SK-N-SH (cell line): ENCODE measurements at regions of chr20 and their contacts with region 1.

Region 1: DNA sequence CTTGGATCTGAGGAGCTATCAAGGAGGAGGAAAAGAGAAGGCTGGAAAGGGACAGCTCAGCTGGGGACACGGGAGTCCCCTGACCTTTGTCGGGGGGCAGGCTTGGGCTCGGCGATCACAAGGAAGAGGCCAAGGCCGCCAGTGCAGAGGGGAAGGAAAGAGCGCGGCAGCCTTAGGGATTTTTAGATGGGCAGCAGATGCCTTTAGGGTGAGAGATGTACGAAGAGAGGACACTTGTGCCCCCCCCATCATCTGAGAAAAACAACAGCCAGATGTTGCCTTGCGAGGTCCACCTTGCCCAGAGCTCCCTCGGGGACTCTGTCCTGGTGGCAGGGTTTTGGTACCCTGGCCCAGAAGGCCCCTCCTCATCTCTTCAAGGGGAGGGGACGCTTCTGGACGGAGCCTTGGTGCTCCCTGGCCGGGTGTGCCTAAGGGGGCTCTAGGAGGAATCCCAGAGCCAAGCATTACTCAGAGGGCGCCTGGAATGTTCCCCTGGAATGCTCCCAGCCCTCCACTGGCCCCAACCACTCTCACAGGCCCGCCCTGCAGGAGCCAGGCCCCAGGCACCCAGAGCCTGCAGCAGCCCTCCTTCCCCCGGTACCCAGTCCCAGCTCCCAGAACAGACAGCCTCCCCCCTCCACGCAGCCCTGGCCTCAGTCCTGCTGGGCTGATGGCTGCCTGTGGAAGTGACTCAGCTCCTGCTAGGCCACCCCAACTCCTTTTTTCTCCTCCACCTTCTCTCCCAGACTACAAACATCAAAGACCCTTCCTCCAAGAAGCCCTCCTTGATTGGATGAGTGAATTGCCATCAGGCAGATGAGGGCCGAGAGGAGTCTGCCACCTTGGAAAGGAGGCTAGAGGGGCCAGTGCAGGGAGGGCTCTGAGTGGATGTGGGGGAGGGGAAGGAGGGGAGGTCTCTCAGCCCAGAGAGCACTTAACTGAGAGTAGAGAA is 1.8 kb downstream of the ADAM33 start:
- DNase-seq: peak; percentile 59
- H3K4me3 ChIP-seq: no peak overlapping the region
- H3K27ac ChIP-seq: peak overlapping the region; percentile 13 to 62; a peak in 3 of 4 replicates
- H3K4me1 ChIP-seq: peaks cover 19 to 24% of the 10 kb centered on the region in 2 experiments; a peak in 2 of 4 replicates
- H3K27me3 ChIP-seq: peaks cover 15% of the 10 kb centered on the region
- CTCF ChIP-seq: no peak
- EP300 ChIP-seq: no peak
- RAD21 ChIP-seq: no peak

Region 2: GRCh38 chr20:3563548-3564177 is 116.4 kb before region 1 on chr20:
- CTCF ChIA-PET with region 1: interaction called, 20 read pairs
- POLR2A ChIA-PET with region 1: no interaction called
- DNase-seq: peak; percentile 53
- H3K4me3 ChIP-seq: no peak overlapping the region; a peak in 1 of 4 replicates
- H3K27ac ChIP-seq: no peak overlapping the region
- H3K4me1 ChIP-seq: no peaks in the 10 kb centered on the region
- H3K27me3 ChIP-seq: no peaks in the 10 kb centered on the region
- CTCF ChIP-seq: peak; percentile 83
- EP300 ChIP-seq: no peak
- RAD21 ChIP-seq: peak; percentile 85

Region 3: DNA sequence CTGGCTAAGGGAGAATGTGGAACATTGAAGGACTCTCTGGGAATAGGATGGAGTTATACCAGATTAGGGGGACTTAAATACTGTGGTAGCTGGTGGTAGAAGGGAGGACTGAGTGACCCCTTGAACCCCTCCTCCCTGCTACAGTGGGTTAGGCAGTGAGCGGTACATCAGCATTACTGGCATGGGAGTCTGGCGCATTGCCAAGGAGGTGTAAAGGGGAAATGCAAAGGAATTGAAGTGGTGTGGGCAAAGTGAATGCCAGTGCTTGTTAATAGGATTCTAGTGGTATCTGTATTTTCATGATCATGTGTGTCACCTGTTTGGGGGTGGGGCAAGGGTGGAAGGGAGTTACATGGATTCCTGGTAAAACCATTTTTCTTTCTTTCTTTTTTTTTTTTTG is 76.9 kb before region 1 on chr20:
- CTCF ChIA-PET with region 1: no interaction called
- POLR2A ChIA-PET with region 1: no interaction called
- DNase-seq: no peak
- H3K4me3 ChIP-seq: no peak overlapping the region
- H3K27ac ChIP-seq: no peak overlapping the region
- H3K4me1 ChIP-seq: no peaks in the 10 kb centered on the region
- H3K27me3 ChIP-seq: no peaks in the 10 kb centered on the region
- CTCF ChIP-seq: no peak
- EP300 ChIP-seq: no peak
- RAD21 ChIP-seq: no peak

Region 4: DNA sequence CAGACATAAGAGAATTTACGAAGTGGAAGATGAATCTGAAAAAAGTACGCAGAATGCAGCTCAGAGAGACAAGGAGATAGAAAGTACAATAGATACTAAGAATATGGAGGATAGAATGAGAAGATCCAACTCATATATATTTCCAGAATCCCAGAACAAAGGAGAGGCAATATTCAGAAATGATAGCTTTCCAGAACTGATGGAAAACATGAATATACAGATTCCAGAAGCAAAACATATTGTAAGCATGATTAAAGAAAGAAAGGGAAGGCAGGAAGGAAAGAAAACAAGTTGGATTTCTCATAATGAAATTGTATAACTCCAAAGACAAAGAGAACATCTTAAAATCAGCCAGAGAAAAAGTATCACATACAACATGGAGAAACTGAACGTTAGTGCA is 39.8 kb before region 1 on chr20:
- CTCF ChIA-PET with region 1: no interaction called
- POLR2A ChIA-PET with region 1: no interaction called
- DNase-seq: no peak
- H3K4me3 ChIP-seq: no peak overlapping the region
- H3K27ac ChIP-seq: no peak overlapping the region
- H3K4me1 ChIP-seq: no peaks in the 10 kb centered on the region
- H3K27me3 ChIP-seq: no peaks in the 10 kb centered on the region
- CTCF ChIP-seq: no peak
- EP300 ChIP-seq: no peak
- RAD21 ChIP-seq: no peak

Region 5: GRCh38 chr20:3696200-3696599 is 16.2 kb after region 1 on chr20:
- CTCF ChIA-PET with region 1: interaction called, 39 read pairs
- POLR2A ChIA-PET with region 1: no interaction called
- DNase-seq: no peak
- H3K4me3 ChIP-seq: no peak overlapping the region
- H3K27ac ChIP-seq: no peak overlapping the region
- H3K4me1 ChIP-seq: no peaks in the 10 kb centered on the region
- H3K27me3 ChIP-seq: no peaks in the 10 kb centered on the region
- CTCF ChIP-seq: peak; percentile 55
- EP300 ChIP-seq: no peak
- RAD21 ChIP-seq: no peak

Region 6: DNA sequence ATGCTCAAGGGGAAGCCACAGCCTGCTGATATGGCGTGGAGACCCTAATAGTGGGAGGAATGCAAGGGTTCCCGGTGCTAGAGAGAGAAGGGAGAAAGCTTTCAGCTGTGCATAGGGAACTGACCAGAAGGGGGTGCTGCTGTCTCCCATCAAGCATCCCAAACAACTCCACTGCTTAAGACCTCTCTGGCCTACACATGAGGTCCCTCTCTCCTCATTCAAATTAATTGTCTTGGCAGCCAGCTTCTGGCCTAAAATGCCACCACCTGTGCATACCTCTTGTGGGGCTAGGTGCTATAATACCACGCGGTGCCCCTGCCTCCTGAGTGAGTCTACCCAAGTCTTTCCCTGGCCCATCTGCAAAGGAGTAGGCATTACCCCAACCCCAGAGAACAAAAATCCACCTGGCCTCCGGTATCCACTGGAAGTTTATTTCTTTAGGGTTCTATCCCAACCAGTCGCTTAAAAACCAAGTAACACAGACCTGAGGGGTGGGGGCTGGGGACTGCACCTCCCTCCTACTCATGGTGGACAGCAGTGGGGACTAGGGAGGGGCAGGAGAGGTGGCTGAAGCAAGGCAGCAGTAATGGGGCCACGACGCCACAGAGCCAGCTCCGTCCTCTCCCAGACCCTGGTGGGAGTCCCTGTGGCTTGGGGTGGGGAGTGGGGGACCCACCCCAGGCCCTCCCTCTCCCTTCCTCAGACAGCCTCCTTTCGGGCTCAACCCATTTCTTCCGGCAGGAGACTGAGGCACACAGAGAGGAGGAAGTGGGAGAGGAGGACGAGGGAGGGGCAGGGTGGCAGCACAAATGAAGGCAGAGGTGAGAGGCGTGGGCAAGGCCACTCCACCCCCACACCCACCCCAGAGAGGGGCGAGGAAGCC is 73.3 kb after region 1 on chr20:
- CTCF ChIA-PET with region 1: interaction called, 38 read pairs
- POLR2A ChIA-PET with region 1: no interaction called
- DNase-seq: peak; percentile 82
- H3K4me3 ChIP-seq: no peak overlapping the region
- H3K27ac ChIP-seq: no peak overlapping the region
- H3K4me1 ChIP-seq: peaks cover 0 to 6% of the 10 kb centered on the region in 2 experiments; a peak in 1 of 4 replicates
- H3K27me3 ChIP-seq: no peaks in the 10 kb centered on the region
- CTCF ChIP-seq: peak; percentile 77
- EP300 ChIP-seq: no peak
- RAD21 ChIP-seq: peak; percentile 72

Region 7: DNA sequence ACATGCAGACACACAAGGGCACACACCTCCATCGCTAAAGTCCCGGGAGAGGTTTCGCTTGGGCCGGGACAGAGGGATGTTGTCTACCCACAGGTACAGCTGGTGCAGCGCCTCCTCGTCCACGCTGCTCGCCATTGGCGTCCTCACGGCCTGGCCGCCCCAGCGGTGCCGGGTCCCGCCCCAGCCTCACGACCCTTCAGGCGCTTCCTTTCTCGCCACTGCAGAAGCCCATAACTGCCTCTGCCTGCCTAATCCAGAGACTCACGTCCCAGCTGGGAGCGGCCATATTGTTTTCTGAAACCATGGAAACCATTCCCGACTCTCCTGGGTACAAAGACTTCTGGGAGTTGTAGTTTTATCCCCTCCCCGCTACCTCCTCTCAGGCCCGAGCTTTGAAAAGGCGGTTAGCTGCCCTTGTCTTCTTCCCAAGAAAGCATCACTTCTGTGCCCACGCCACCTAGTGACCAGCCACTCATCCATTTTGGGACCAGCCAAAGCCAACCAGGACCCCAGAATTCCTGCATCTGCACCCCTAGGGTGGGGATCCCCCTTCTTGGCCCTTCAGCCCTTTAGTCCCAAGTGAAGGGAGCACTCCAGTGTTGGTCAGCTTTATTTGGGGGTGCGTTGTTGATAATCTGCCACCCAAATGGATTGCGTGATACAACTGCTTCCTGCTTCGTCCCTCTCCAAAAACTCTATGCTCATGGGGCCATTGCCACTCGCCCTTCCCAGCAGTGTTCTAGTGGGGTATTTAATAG is 101.3 kb after region 1 on chr20 and contains the start of gene SPEF1:
- CTCF ChIA-PET with region 1: interaction called, 25 read pairs
- POLR2A ChIA-PET with region 1: no interaction called
- DNase-seq: peak; percentile 95
- H3K4me3 ChIP-seq: peak within 1 kb of the TSS; percentile 51 to 68
- H3K27ac ChIP-seq: peak within 1 kb of the TSS in 1 of 2 experiments; percentile 28; a peak in 2 of 4 replicates
- H3K4me1 ChIP-seq: peaks cover 20 to 38% of the 10 kb centered on the region in 2 experiments; a peak in 3 of 4 replicates
- H3K27me3 ChIP-seq: no peaks in the 10 kb centered on the region
- CTCF ChIP-seq: peak; percentile 68
- EP300 ChIP-seq: no peak
- RAD21 ChIP-seq: peak; percentile 60
- polyA plus RNA-seq, gene SPEF1: 1.6 and 1.8 TPM in 2 replicates

Region 8: DNA sequence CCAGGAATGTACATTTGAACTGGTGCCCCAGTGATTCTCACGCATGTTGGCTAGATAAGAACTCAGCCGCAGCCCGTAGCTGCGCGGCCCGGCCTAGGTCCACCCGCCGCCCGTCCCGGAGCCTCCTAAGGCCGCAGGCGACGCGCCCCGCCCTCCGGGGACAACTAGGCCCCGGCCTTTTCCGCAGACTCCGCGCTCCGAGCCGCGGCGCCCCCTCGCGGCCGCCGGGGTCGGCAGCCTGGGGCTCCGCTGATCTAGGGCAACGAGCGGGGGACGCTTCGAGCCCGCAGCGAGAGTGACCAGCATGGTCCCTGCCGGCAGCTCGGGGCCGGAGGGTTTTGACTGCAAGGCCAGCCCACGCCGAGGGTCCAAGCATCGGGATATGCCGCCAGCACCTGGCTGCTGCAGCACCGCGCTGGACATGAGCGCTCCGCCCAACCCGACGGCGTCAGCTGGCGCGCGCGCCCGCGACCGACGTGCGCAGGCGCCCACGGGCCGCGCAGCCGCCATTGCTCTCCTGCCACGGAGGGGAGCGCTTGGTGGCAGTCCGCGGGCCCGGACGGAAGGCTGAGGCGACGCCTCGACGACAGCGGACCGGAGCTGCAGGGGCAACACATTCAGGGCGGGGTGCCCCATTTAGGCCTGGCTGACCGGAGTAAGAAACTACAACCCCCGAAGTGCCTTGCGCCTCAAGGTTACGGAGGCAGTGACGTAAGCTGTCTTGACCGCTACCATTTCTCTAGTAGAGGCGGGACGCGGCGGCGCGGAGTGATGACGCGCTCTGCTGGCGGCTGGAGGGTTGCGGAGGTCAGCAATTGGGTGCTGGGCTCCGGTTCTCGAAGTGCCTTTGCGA is 140.2 kb after region 1 on chr20 and contains the start of gene AP5S1:
- CTCF ChIA-PET with region 1: interaction called, 13 read pairs
- POLR2A ChIA-PET with region 1: no interaction called
- DNase-seq: peak; percentile 93
- H3K4me3 ChIP-seq: peak within 1 kb of the TSS; percentile 80 to 84
- H3K27ac ChIP-seq: peak within 1 kb of the TSS; percentile 92 to 97
- H3K4me1 ChIP-seq: peaks cover 11 to 23% of the 10 kb centered on the region in 2 experiments; a peak in 2 of 4 replicates
- H3K27me3 ChIP-seq: no peaks in the 10 kb centered on the region
- CTCF ChIP-seq: peak; percentile 98
- EP300 ChIP-seq: 0 out of 4 replicates have a peak, but pooled peaks of 1 of the 2 experiments have one; percentile 3
- RAD21 ChIP-seq: peak; percentile 64
- polyA plus RNA-seq, gene AP5S1: 8.6 and 10.3 TPM in 2 replicates